ENCODE measurements at regions of chr2 and their contacts with region 1.

Region 1: DNA sequence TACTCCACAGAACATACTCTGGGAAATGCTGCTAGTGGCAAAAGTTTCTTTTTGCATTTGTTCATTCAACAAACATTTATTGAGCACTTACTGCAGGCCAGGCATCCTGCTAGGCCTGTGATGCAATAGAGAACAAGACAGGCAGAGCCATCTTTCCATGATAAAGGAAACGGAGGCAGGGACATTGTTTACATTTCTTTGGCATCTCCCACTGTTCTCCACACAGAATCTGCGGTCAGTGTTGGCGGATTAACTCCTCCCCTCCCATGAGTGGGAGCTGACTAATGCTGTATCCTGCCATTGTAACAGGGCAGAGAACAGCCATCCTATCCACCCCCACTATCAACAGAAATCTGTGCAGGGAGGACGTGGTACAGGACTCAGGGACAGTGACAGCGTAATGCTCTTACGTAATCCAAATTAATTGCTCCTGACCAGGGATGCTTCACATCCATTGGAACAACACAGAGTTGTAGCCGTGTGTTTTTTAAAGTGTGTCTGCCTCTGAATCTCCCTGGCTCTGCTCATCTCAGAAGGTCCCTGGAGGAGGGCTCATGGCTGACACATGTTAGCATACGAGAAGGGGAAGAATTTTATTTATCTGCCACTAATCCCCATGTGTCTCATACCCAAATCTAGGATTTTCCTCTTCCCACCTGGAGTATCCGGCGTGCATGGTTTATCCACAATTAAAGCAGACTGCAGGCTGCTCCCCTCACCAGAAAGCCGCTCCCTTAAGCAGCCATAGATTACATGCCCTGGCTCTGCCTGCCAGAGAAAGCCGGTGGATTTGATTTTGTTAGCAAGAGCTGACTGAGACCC is 32.3 kb downstream of the STEAP3 start:
- DNase-seq: no peak
- H3K4me3 ChIP-seq: no peak overlapping the region
- H3K4me3 Mint-ChIP-seq: no peak overlapping the region
- H3K27ac Mint-ChIP-seq: peak overlapping the region; percentile 91
- H3K4me1 ChIP-seq: peaks cover 45% of the 10 kb centered on the region
- H3K4me1 Mint-ChIP-seq: peaks cover 22% of the 10 kb centered on the region
- H3K27me3 ChIP-seq: no peaks in the 10 kb centered on the region
- H3K27me3 Mint-ChIP-seq: no peaks in the 10 kb centered on the region
- CTCF ChIP-seq: no peak

Region 2: DNA sequence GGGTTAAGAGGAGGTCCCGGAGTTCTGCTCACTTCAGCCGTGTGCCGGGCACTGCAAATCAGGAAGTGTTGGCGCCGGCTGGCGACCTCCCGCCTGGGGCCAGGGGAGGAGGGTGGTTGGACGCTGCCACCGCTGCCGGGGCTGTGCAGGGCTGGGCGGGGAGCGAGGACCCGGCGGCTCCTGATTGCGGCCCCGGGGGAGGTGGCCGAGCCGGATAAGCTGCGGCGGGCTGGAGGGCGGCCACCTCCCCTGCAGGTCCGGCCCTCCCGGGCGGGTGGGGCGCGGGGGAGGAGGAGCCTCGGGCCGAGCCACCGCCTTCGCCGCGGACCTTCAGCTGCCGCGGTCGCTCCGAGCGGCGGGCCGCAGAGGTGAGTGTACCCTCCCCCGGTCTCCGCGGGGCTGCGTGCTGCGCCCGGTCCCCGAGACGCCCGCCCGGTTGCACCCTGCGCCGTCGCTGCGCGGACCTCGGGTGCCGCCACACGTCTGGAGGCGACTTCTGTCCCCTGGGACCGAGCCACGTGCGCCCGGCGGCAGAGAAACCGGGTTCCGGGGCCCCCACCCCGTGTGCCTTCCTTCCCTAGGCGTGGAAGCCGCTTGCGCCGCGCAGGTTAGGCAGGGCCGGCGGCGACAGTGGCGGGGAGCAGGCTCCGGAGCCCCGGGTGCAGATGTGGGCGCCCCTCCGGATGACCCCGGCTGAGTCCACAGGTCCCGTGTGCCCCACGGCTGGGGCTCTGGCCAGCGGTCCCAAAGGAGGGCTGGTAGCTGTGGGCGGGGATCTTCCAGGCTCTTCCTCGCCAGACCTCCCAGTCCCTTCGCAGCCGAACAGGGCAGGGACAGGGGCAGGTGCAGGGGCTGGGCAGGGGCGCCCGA is 32.2 kb before region 1 on chr2 and contains the start of gene STEAP3:
- CTCF ChIA-PET with region 1: no interaction called
- POLR2A ChIA-PET with region 1: interaction called, 6 read pairs
- intact Hi-C with region 1: loop called (anchors 2 kb)
- DNase-seq: peak; percentile 90 to 93
- H3K4me3 ChIP-seq: peak within 1 kb of the TSS; percentile 77
- H3K4me3 Mint-ChIP-seq: peak within 1 kb of the TSS; percentile 68
- H3K27ac Mint-ChIP-seq: no peak within 1 kb of the TSS
- H3K4me1 ChIP-seq: peaks cover 25% of the 10 kb centered on the region
- H3K4me1 Mint-ChIP-seq: no peaks in the 10 kb centered on the region
- H3K27me3 ChIP-seq: no peaks in the 10 kb centered on the region
- H3K27me3 Mint-ChIP-seq: no peaks in the 10 kb centered on the region
- CTCF ChIP-seq: no peak
- total RNA-seq, gene STEAP3: 20.1 and 20.4 TPM in 2 replicates

Region 3: DNA sequence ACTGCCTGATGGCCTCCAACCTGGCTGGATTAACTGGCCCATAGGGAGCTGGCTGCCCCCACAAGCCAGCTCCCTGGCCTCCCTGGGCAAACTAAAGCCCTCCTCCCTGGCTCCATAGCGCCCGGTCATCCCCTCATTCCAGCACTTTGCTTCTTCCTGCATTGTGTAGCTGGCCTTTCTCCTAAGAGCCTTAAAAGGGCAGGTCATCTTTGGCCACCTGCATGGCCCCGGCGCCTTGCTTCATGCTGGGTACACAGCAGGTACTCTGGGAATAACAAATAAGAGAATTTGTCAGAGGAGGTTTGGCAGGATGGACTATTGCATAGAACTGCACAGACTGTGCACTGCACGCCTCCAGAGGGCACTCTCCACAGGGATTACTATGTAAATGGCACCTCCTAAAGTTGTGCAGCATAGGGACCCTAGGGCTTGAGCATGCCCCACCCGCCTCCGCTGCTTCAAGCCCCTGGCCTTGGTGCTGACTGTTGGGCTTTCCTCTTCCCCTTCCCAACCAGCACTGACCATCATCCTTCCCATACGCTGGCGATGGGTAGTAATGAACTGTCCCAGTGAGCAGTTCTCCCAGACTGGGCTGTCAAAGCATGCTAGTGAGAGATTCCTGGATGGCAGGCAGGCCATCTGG is 21.5 kb before region 1 on chr2:
- CTCF ChIA-PET with region 1: interaction called, 6 read pairs
- POLR2A ChIA-PET with region 1: no interaction called
- intact Hi-C with region 1: loop called (anchors 1 kb)
- DNase-seq: peak; percentile 63 to 71
- H3K4me3 ChIP-seq: no peak overlapping the region
- H3K4me3 Mint-ChIP-seq: no peak overlapping the region
- H3K27ac Mint-ChIP-seq: no peak overlapping the region
- H3K4me1 ChIP-seq: peaks cover 16% of the 10 kb centered on the region
- H3K4me1 Mint-ChIP-seq: peaks cover 32% of the 10 kb centered on the region
- H3K27me3 ChIP-seq: no peaks in the 10 kb centered on the region
- H3K27me3 Mint-ChIP-seq: no peaks in the 10 kb centered on the region
- CTCF ChIP-seq: peak; percentile 25 to 49

Region 4: GRCh38 chr2:119326938-119327337 is 71.0 kb after region 1 on chr2:
- CTCF ChIA-PET with region 1: interaction called, 10 read pairs
- POLR2A ChIA-PET with region 1: no interaction called
- intact Hi-C with region 1: no loop called
- DNase-seq: no peak
- H3K4me3 ChIP-seq: no peak overlapping the region
- H3K4me3 Mint-ChIP-seq: no peak overlapping the region
- H3K27ac Mint-ChIP-seq: no peak overlapping the region
- H3K4me1 ChIP-seq: peaks cover 8% of the 10 kb centered on the region; the same call in 1 of the 2 replicates
- H3K4me1 Mint-ChIP-seq: no peaks in the 10 kb centered on the region
- H3K27me3 ChIP-seq: no peaks in the 10 kb centered on the region
- H3K27me3 Mint-ChIP-seq: no peaks in the 10 kb centered on the region
- CTCF ChIP-seq: no peak

Region 5: DNA sequence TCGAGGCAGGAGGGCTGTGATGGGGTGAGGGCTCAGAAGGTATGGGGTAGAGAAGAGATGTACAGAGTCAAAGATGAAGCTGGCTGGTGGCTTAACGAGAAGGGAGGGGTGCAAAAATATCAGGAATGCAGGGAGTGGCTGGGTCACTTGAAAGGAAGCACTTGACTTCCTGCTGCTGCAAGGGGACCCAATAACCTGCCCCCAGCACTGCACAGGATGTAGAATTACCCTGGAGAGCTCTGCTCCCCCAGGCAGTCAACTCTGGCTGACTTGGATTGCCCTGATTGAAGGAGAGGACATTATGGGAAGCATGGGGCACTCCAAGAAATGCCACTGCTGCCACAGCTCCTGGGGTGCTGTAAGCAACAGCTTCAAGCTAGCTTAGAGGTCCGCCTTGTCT is 330.1 kb after region 1 on chr2:
- CTCF ChIA-PET with region 1: no interaction called
- POLR2A ChIA-PET with region 1: no interaction called
- intact Hi-C with region 1: no loop called
- DNase-seq: no peak
- H3K4me3 ChIP-seq: no peak overlapping the region
- H3K4me3 Mint-ChIP-seq: no peak overlapping the region
- H3K27ac Mint-ChIP-seq: peak overlapping the region; percentile 1
- H3K4me1 ChIP-seq: no peaks in the 10 kb centered on the region
- H3K4me1 Mint-ChIP-seq: no peaks in the 10 kb centered on the region
- H3K27me3 ChIP-seq: no peaks in the 10 kb centered on the region
- H3K27me3 Mint-ChIP-seq: peaks cover 9% of the 10 kb centered on the region
- CTCF ChIP-seq: no peak

Region 6: GRCh38 chr2:119849838-119850539 is 594.0 kb after region 1 on chr2:
- CTCF ChIA-PET with region 1: no interaction called
- POLR2A ChIA-PET with region 1: no interaction called
- intact Hi-C with region 1: no loop called
- DNase-seq: no peak
- H3K4me3 ChIP-seq: no peak overlapping the region
- H3K4me3 Mint-ChIP-seq: no peak overlapping the region
- H3K27ac Mint-ChIP-seq: no peak overlapping the region
- H3K4me1 ChIP-seq: no peaks in the 10 kb centered on the region
- H3K4me1 Mint-ChIP-seq: no peaks in the 10 kb centered on the region
- H3K27me3 ChIP-seq: no peaks in the 10 kb centered on the region
- H3K27me3 Mint-ChIP-seq: no peaks in the 10 kb centered on the region
- CTCF ChIP-seq: no peak

Measured in Caco-2 (cell line).